ENCODE measurements at regions of chr1 and their contacts with region 1.

Region 1: DNA sequence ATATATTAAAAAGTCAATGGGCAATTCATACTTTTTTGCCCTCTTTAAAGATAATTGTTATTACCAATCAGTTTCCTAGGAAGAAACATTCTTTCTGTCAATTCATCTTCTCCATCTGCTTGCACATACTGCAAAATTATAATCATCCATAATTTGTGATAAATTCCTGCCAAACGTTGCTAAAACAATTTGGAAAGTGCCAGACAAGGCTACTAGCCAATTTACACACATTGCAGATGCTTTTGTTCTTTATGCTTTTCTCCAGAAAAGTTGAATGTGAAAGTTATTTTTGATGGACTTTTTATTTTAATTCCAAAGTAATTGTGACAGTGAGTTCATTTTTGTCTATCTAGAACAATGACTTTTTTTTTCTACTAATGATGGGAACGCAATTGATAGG is 992.8 kb upstream of the ADGRL2 start:
- DNase-seq: no peak
- H3K4me3 ChIP-seq: no peak overlapping the region
- H3K4me3 Mint-ChIP-seq: no peak overlapping the region
- H3K27ac Mint-ChIP-seq: no peak overlapping the region
- H3K4me1 ChIP-seq: no peaks in the 10 kb centered on the region
- H3K4me1 Mint-ChIP-seq: no peaks in the 10 kb centered on the region
- H3K27me3 ChIP-seq: no peaks in the 10 kb centered on the region
- H3K27me3 Mint-ChIP-seq: no peaks in the 10 kb centered on the region
- CTCF ChIP-seq: no peak

Region 2: GRCh38 chr1:80751204-80751603 is 56.8 kb before region 1 on chr1:
- CTCF ChIA-PET with region 1: no interaction called
- POLR2A ChIA-PET with region 1: no interaction called
- intact Hi-C with region 1: loop called (anchors 2 kb)
- DNase-seq: no peak
- H3K4me3 ChIP-seq: no peak overlapping the region
- H3K4me3 Mint-ChIP-seq: no peak overlapping the region
- H3K27ac Mint-ChIP-seq: no peak overlapping the region
- H3K4me1 ChIP-seq: no peaks in the 10 kb centered on the region
- H3K4me1 Mint-ChIP-seq: no peaks in the 10 kb centered on the region
- H3K27me3 ChIP-seq: no peaks in the 10 kb centered on the region
- H3K27me3 Mint-ChIP-seq: no peaks in the 10 kb centered on the region
- CTCF ChIP-seq: no peak

Region 3: GRCh38 chr1:81044708-81045107 is 236.7 kb after region 1 on chr1:
- CTCF ChIA-PET with region 1: no interaction called
- POLR2A ChIA-PET with region 1: no interaction called
- intact Hi-C with region 1: no loop called
- DNase-seq: no peak
- H3K4me3 ChIP-seq: no peak overlapping the region
- H3K4me3 Mint-ChIP-seq: no peak overlapping the region
- H3K27ac Mint-ChIP-seq: no peak overlapping the region
- H3K4me1 ChIP-seq: peaks cover 9% of the 10 kb centered on the region
- H3K4me1 Mint-ChIP-seq: peaks cover 6% of the 10 kb centered on the region
- H3K27me3 ChIP-seq: no peaks in the 10 kb centered on the region
- H3K27me3 Mint-ChIP-seq: no peaks in the 10 kb centered on the region
- CTCF ChIP-seq: no peak